Colonic mucosa (tissue), 4 donors: ENCODE measurements at regions of chr18 and their contacts with region 1.

Region 1: DNA sequence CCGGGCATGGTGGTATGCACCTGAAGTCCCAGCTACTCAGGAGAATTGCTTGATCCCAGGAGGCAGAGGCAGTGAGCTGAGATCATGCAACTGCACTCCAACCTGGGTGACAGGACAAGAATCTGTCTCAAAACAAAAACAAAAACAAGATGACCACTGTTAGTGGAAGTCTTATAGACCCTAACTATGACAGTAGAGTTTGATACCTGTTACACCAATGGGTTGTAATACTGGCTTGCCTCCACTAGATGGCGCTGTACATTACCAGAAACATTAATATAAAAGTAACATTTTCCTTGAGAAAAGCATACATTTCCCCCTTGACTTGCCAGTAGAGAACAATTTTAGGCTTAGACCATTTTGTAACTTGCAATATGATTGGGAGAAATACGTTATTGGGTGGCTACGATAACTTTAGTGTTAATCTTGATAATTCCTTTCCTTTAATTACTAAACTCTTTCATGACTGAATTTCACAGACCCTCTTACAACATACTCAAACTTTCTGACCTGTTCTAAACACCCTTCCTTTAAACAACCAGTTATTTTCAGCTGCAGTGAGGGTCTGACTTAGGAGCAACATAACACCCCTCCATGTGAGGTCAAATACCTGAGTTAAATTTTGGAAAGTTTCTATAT is 19.5 kb downstream of the SLC25A52 start:
- DNase-seq: peak; percentile 48
- H3K4me3 ChIP-seq: no peak overlapping the region
- H3K27ac ChIP-seq: no peak overlapping the region
- H3K4me1 ChIP-seq: no peaks in the 10 kb centered on the region
- H3K27me3 ChIP-seq: no peaks in the 10 kb centered on the region
- CTCF ChIP-seq: peak; percentile 93

Region 2: GRCh38 chr18:31484461-31484860 is 256.8 kb before region 1 on chr18:
- intact Hi-C with region 1: no loop called
- DNase-seq: no peak
- H3K4me3 ChIP-seq: no peak overlapping the region
- H3K27ac ChIP-seq: no peak overlapping the region
- H3K4me1 ChIP-seq: no peaks in the 10 kb centered on the region
- H3K27me3 ChIP-seq: no peaks in the 10 kb centered on the region
- CTCF ChIP-seq: no peak

Region 3: DNA sequence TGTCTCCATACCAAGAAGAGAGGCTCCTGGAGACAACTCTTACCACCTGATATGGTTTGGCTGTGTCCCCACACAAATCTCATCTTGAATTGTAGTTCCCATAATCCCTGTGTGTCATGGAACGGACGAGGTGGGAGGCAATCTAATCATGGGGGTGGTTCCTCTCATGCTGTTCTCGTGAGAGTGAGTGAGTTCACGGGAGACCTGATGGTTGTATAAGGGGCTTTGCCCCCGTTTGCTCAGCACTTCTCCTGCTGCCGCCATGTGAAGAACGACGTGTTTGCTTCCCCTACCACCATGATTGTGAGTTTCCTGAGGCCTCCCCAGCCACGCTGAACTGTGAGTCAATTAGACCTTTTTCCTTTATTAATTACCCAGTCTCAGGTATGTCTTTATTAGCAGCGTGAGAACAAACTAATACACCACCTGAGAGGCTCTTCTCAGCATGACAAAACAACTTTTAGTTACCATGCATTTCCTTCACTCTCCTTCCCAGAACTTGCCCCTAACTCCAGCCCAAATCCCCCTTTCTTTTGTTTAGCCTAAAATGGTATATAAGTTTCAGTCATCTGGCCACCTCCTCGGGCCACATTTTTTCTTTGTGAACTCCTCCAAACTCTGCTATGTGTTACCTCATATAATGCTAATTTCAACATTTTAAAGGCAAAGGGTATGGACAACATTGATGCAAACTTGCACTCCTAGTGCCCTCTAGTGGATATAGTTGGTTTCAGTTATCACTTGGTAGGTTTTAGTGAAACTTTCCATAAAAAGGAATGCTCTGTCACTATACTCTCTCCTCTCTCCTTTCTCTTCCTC is 78.1 kb after region 1 on chr18:
- intact Hi-C with region 1: loop called (anchors 5 kb)
- DNase-seq: peak; percentile 19
- H3K4me3 ChIP-seq: no peak overlapping the region
- H3K27ac ChIP-seq: no peak overlapping the region
- H3K4me1 ChIP-seq: no peaks in the 10 kb centered on the region
- H3K27me3 ChIP-seq: no peaks in the 10 kb centered on the region
- CTCF ChIP-seq: peak; percentile 63

Region 4: DNA sequence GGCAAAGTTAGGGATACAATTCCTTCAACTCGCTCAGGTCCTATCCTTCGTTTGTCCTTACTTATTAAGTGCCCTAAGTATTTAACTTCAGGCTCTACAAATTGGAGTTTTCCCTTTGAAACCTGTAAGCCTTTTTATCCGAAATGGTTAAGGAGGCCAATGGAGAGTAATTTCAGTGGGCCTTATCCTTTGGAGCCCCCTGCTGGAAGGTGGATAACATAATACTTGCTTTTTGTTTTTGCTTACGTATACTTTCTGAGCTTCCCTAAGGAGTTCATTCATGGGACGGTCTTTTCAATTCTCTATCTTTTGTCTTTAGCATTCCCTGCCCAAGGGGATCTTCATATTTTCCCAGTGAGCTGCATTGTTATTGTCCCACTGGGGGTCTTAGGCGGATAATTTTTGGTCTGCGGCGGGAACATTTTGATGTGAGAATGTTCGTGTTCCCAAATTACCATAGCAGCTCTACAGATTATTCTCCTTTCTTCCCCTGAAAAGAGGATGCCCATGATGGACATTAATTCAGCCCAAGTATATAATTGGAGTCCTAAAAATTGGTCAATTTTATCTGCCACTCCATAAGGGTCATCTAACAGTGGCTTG is 236.2 kb after region 1 on chr18:
- intact Hi-C with region 1: loop called (anchors 5 kb)
- DNase-seq: peak; percentile 33
- H3K4me3 ChIP-seq: no peak overlapping the region
- H3K27ac ChIP-seq: no peak overlapping the region
- H3K4me1 ChIP-seq: no peaks in the 10 kb centered on the region
- H3K27me3 ChIP-seq: no peaks in the 10 kb centered on the region
- CTCF ChIP-seq: peak; percentile 52